Mucosa of descending colon (tissue), 3 donors: ENCODE measurements at regions of chr2 and their contacts with region 1.

Region 1: DNA sequence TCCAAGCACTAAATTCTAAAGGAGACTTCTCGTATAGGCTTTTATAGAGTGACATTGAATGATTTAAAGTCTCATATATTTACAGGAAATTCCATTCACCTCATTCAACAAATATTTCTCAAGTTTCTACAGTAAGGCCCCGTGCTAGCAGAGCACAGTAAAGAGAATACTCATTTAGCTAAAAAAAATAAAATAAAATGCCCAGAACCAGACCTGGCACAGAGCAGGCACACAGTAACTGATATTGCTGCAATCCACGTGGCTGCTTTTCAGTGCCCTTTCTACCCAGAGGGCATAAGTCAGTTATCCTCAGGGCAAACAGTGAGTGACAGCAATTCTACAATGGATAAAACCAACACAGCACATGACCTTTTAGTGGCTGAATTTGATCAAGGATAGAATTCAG is 52.6 kb downstream of the SUMO1 start:
- DNase-seq: peak in 1 of 3 donors; percentile 16
- ATAC-seq: peak; percentile 57
- H3K4me3 ChIP-seq: no peak overlapping the region
- H3K4me1 ChIP-seq: peaks cover 6% of the 10 kb centered on the region
- CTCF ChIP-seq: no peak

Region 2: GRCh38 chr2:201795607-201796477 is 390.0 kb before region 1 on chr2:
- intact Hi-C with region 1: loop called in 1 of 2 experiments (anchors 10 kb)
- DNase-seq: peak in 1 of 3 donors; percentile 17
- ATAC-seq: peak; percentile 47
- H3K4me3 ChIP-seq: no peak overlapping the region
- H3K4me1 ChIP-seq: no peaks in the 10 kb centered on the region
- CTCF ChIP-seq: peak; percentile 29

Region 3: DNA sequence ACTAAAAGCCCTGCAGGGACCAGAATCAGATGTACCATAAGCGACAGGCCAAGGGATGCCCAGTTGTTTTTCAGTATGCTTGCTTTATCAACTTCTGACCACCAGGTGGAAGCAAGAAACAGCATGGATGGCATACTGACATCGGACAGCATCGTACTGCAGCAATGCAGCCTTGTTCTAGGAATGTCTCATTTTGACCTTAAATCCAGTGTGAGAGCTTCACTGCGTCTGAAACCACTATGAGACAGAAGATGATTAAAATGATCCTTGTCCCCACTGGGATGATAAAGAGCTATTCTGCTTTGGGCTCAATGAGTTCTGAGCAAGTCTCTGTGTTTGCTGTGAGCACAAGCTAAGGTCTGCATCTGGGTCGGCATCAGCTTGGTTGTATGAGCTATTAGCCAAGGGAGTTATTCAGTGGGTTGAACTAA is 325.2 kb before region 1 on chr2:
- intact Hi-C with region 1: no loop called
- DNase-seq: peak in 1 of 3 donors; percentile 75
- ATAC-seq: peak; percentile 80
- H3K4me3 ChIP-seq: no peak overlapping the region
- H3K4me1 ChIP-seq: peaks cover 3% of the 10 kb centered on the region
- CTCF ChIP-seq: peak; percentile 71

Region 4: GRCh38 chr2:201923436-201924328 is 262.1 kb before region 1 on chr2:
- intact Hi-C with region 1: no loop called
- DNase-seq: no peak
- ATAC-seq: no peak
- H3K4me3 ChIP-seq: no peak overlapping the region
- H3K4me1 ChIP-seq: no peaks in the 10 kb centered on the region
- CTCF ChIP-seq: no peak